Heart right ventricle (tissue), 16 donors: ENCODE measurements at regions of chr14 and their contacts with region 1.

Region 1: DNA sequence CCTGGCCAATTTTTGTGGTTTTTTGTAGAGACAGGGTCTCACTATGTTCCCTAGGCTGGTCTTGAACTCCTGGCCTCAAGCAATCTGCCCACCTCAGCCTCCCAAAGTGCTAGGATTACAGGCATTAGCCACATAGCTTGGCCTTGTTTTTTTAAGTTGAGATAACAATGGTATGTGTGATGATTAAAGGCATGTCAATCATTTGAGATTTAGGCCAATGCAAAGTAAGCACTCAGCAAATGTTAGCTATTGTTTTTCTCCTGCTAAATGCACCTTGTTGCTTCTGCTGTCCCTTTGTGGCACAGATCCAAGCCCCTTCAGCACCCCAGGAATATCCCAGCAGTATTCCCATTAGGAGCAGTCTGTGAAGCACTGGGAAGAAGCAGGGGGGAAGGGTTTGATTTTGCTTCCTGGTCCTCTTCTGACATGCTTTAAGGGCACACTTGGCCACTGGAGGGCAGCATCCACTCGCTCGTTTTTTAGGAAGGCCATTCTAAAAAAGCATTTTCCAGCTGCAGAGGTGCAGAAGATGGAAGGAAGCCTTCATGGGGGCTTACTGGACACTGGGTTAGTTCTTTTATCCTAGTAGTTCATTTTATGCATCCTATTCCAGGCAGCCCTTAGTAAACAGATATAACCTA is 70.2 kb upstream of the ZFP36L1 start:
- DNase-seq: peak; percentile 75 to 82
- ATAC-seq: peak; percentile 33 to 87 (median 78)
- H3K4me3 ChIP-seq: no peak overlapping the region
- H3K27ac ChIP-seq: no peak overlapping the region
- H3K4me1 ChIP-seq: peaks cover 0 to 3% (median 0%) of the 10 kb centered on the region in 9 donors
- H3K27me3 ChIP-seq: no peaks in the 10 kb centered on the region
- CTCF ChIP-seq: peak; percentile 54 to 84 (median 80)

Region 2: GRCh38 chr14:69005432-69006147 is 142.5 kb after region 1 on chr14:
- intact Hi-C with region 1: loop called in 1 of 10 experiments (anchors 5 kb)
- DNase-seq: peak; percentile 29 to 52
- ATAC-seq: peak; percentile 8 to 88 (median 65)
- H3K4me3 ChIP-seq: no peak overlapping the region
- H3K27ac ChIP-seq: peak overlapping the region in 2 of 10 donors; percentile 1 to 59
- H3K4me1 ChIP-seq: peaks cover 0 to 25% (median 0%) of the 10 kb centered on the region in 9 donors
- H3K27me3 ChIP-seq: no peaks in the 10 kb centered on the region
- CTCF ChIP-seq: no peak

Region 3: DNA sequence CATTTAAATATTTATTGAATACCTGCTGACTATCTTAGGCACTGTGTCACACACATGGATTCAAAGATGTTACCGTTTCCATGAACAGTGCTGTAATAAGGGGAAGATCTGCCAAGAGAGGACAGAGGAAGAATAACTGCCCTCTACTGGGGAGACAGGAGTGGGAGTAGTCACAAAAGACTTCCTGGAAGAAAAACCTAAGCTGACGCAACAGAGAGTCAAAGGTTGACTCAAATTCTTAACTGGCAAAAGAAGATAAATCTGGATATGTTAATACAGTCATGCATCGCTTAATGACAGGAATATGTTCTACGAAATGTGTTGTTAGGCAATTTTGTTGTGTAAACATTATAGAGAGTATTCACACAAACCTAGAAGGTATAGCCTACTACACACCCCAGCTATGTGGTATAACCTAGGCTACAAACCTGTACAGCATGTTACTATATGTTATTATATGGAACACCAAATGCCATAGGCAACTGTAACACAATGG is 238.3 kb after region 1 on chr14:
- intact Hi-C with region 1: loop called in 9 of 10 experiments (anchors 2 to 10 kb)
- DNase-seq: peak in 1 of 2 donors; percentile 48
- ATAC-seq: peak; percentile 61 to 95 (median 80)
- H3K4me3 ChIP-seq: no peak overlapping the region
- H3K27ac ChIP-seq: peak overlapping the region in 2 of 10 donors; percentile 4 to 31
- H3K4me1 ChIP-seq: peaks cover 0 to 10% (median 0%) of the 10 kb centered on the region in 9 donors
- H3K27me3 ChIP-seq: no peaks in the 10 kb centered on the region
- CTCF ChIP-seq: peak in 8 of 9 donors; percentile 24 to 71 (median 60)

Region 4: DNA sequence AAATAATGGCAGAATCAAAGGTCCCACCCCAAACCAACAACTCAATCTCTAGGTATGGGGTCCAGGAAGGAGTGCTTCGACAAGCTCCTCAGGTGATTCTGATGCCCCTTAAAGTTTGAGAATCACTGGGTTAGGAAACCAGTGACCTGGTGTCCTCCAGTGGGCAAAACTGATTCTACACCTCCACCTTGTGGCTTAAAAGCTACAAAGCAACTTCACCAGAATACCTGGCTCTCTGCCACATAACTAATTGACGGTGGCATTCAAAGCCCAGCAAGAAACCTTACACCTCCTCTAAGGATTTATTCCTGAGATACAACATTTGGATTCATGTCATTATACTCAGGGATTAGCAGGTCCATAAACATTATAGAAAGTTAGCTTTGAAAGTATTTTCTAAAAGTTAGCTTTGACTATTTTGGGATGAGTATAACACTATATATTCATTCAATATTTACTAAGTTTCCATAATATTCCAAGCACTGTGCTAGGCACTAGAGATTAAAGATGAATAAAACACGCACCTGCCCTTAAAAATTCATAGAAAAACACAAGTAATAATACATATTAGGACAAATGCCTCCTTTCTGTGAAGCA is 244.4 kb after region 1 on chr14:
- intact Hi-C with region 1: loop called (anchors 1 to 10 kb)
- DNase-seq: peak in 1 of 2 donors; percentile 61
- ATAC-seq: peak; percentile 34 to 82 (median 66)
- H3K4me3 ChIP-seq: no peak overlapping the region
- H3K27ac ChIP-seq: no peak overlapping the region
- H3K4me1 ChIP-seq: peaks cover 0 to 6% (median 0%) of the 10 kb centered on the region in 9 donors
- H3K27me3 ChIP-seq: no peaks in the 10 kb centered on the region
- CTCF ChIP-seq: peak; percentile 34 to 79 (median 69)